Colonic mucosa (tissue), 4 donors: ENCODE measurements at regions of chr18 and their contacts with region 1.

Region 1: GRCh38 chr18:31892936-31893335 is 50.0 kb downstream of the TRAPPC8 start:
- DNase-seq: no peak
- H3K4me3 ChIP-seq: no peak overlapping the region
- H3K27ac ChIP-seq: no peak overlapping the region
- H3K4me1 ChIP-seq: no peaks in the 10 kb centered on the region
- H3K27me3 ChIP-seq: no peaks in the 10 kb centered on the region
- CTCF ChIP-seq: no peak

Region 2: DNA sequence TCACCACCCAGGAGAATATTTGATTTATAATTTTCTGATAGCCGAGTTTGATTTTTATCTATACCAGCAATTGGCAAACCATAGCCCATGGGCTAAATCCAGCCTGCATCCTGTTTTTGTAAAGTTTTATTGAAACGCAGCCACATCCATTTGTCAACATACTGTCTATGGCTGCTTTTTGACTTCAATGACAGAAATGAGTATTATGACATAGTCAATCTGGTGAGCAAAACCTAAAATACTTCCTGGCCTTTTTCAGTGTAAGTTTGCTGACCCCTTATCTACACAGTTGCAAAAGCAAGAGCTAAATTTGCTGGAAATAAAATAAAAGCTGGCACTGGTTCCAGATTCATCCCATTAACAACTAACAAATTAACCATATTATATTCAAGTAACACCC is 52.4 kb before region 1 on chr18:
- intact Hi-C with region 1: loop called (anchors 10 kb)
- DNase-seq: no peak
- H3K4me3 ChIP-seq: no peak overlapping the region
- H3K27ac ChIP-seq: no peak overlapping the region
- H3K4me1 ChIP-seq: no peaks in the 10 kb centered on the region
- H3K27me3 ChIP-seq: no peaks in the 10 kb centered on the region
- CTCF ChIP-seq: no peak

Region 3: DNA sequence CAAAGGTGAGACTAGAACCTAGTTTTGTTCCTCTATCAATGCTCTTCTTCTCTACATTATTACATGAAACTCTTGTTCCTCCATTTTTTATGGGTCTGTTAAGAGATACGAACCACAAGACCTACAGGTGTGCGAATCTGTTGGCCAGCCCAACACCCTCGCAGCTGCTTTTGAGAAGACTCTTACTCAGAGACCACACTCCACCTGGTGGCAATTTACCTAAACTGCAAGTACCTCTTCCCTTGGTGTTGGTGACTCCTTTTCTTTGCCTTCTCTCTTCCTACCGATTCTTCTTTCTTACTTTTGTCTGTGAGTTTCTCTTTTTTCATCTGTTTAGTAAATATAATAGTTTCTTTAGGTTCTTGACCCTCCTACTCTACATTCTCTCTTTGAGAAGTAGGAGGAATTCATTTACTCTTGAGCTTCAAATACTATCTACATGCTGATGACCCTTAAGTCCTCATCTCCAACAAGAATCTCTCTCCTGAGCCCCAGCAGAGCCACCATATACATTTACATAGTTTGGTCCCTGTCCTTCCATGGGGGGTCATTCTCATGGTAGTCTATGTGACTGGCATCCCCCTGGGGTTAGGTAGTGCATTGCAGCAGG is 659.6 kb after region 1 on chr18:
- intact Hi-C with region 1: no loop called
- DNase-seq: peak; percentile 82
- H3K4me3 ChIP-seq: no peak overlapping the region
- H3K27ac ChIP-seq: no peak overlapping the region
- H3K4me1 ChIP-seq: no peaks in the 10 kb centered on the region
- H3K27me3 ChIP-seq: no peaks in the 10 kb centered on the region
- CTCF ChIP-seq: peak; percentile 77